ENCODE measurements at regions of chr3 and their contacts with region 1.

Region 1: GRCh38 chr3:125231895-125232294 is 19.3 kb upstream of the SLC12A8 start:
- DNase-seq: peak in 1 of 2 experiments; percentile 88
- H3K4me3 ChIP-seq: no peak overlapping the region
- H3K27ac ChIP-seq: peak overlapping the region; percentile 95
- H3K4me1 ChIP-seq: peaks cover 21% of the 10 kb centered on the region
- H3K27me3 ChIP-seq: no peaks in the 10 kb centered on the region
- CTCF ChIP-seq: no peak

Region 2: DNA sequence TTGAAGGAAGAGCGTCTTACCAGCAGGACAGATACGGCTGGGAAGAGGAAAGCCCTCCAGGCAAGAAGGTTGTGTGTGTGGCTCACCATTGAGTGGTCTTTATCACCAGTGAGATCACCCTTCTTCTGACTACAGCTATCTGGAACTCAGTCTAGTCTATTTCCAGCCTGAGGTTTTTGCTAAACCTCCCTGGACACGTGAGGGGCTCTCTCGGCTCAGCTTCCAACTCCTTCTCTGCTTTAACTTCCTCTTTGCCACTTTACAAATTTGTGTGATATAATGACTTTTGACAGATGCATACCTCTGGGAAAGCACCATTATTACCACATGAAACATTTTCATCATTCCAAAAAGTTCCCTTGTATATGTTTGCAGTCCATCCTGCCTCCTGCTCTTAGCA is 1224.7 kb before region 1 on chr3:
- CTCF ChIA-PET with region 1: no interaction called
- POLR2A ChIA-PET with region 1: no interaction called
- intact Hi-C with region 1: no loop called
- DNase-seq: no peak
- H3K4me3 ChIP-seq: no peak overlapping the region
- H3K27ac ChIP-seq: no peak overlapping the region
- H3K4me1 ChIP-seq: no peaks in the 10 kb centered on the region
- H3K27me3 ChIP-seq: peaks cover 29% of the 10 kb centered on the region
- CTCF ChIP-seq: no peak

Region 3: GRCh38 chr3:125141596-125142419 is 90.1 kb before region 1 on chr3:
- CTCF ChIA-PET with region 1: no interaction called
- POLR2A ChIA-PET with region 1: interaction called, 13 read pairs
- intact Hi-C with region 1: no loop called
- DNase-seq: no peak
- H3K4me3 ChIP-seq: no peak overlapping the region
- H3K27ac ChIP-seq: no peak overlapping the region
- H3K4me1 ChIP-seq: peaks cover 12% of the 10 kb centered on the region
- H3K27me3 ChIP-seq: no peaks in the 10 kb centered on the region
- CTCF ChIP-seq: no peak

Region 4: DNA sequence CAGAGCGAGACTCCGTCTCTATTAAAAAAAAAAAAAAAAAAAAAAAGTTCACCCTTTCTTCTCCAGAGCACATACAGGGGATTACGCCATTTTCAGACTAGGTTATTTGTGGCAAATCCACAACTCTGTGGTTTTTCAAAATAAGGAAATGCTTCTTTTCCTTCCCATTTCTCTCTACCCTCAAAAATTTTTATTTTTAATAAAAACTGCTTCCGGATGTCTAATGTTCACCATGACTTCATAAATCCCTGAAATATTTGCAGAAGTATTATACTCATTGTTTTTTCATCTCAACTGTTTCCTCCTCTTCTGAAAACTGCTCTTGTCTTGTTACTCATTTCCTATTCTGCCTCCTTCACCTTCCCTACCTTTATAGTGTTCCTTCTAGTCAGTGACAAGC is 25.6 kb after region 1 on chr3:
- CTCF ChIA-PET with region 1: no interaction called
- POLR2A ChIA-PET with region 1: no interaction called
- intact Hi-C with region 1: no loop called
- DNase-seq: no peak
- H3K4me3 ChIP-seq: no peak overlapping the region
- H3K27ac ChIP-seq: no peak overlapping the region
- H3K4me1 ChIP-seq: no peaks in the 10 kb centered on the region
- H3K27me3 ChIP-seq: no peaks in the 10 kb centered on the region
- CTCF ChIP-seq: no peak

Measured in PC-9 (cell line).